Activated CD8-positive, alpha-beta T cell treated with anti-CD3 and anti-CD28 coated beads, Interleukin-2, amount 10 ng/mL, durations not matched to agents 7 days and 5 days (primary cell): ENCODE measurements at regions of chr1 and their contacts with region 1.

Region 1: GRCh38 chr1:23598424-23598823 is 39.1 kb upstream of the ID3 start:
- DNase-seq: no peak
- ATAC-seq: no peak
- H3K4me3 Mint-ChIP-seq: no peak overlapping the region
- H3K27ac Mint-ChIP-seq: peak overlapping the region; percentile 51
- H3K4me1 Mint-ChIP-seq: peaks cover 93% of the 10 kb centered on the region
- H3K27me3 Mint-ChIP-seq: no peaks in the 10 kb centered on the region

Region 2: DNA sequence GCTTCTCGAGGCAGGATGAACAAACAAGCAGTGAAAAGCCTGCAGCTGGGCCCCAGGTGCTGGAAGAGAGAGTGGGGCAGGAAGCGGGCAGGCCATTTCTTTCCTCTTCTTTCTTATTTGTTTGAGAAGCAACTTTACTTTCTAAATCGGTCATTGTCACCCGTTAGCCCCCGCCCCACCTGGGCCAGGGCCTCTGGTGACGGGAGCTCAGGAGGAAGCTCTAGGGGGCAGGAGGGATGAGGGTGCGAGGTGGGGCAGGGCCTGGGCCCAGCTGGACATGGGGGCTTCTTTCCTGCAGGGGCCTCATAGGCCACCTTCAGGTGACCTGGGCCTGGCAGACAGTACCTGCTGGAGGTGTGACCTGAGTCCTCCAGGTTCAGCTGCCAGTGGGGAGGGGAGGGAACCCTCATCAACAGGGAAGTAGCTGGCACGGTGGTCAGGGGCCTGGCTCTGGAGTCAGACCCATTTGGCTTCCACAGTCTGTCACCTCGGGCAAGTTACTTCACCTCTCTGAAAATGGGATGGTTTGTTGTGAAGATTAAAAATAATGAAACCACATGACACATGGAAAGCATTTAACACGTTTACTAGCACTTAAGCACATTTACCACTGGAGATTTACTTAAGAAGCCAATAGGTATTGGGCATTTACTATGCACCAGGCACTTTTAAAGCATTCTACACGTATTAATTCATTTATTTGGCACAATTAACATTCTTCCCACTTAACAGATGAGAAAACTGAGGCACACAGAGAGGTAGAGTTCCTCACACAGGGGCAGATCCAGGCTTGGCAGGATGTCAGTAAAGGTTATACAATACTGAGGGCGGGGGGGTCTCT is 15.0 kb after region 1 on chr1:
- CTCF ChIA-PET with region 1: interaction called, 12 read pairs
- POLR2A ChIA-PET with region 1: interaction called, 19 read pairs
- DNase-seq: peak; percentile 73
- ATAC-seq: peak; percentile 66
- H3K4me3 Mint-ChIP-seq: peak overlapping the region; percentile 53
- H3K27ac Mint-ChIP-seq: peak overlapping the region; percentile 96
- H3K4me1 Mint-ChIP-seq: peaks cover 68% of the 10 kb centered on the region
- H3K27me3 Mint-ChIP-seq: no peaks in the 10 kb centered on the region